ENCODE measurements at regions of chr13 and their contacts with region 1.

Region 1: GRCh38 chr13:27151798-27152599 is 19.6 kb downstream of the USP12 start:
- DNase-seq: no peak
- ATAC-seq: no peak
- H3K4me3 ChIP-seq: no peak overlapping the region
- H3K4me3 Mint-ChIP-seq: no peak overlapping the region
- H3K27ac ChIP-seq: no peak overlapping the region
- H3K27ac Mint-ChIP-seq: no peak overlapping the region
- H3K4me1 ChIP-seq: peaks cover 21% of the 10 kb centered on the region
- H3K4me1 Mint-ChIP-seq: peaks cover 63% of the 10 kb centered on the region
- H3K27me3 ChIP-seq: no peaks in the 10 kb centered on the region
- H3K27me3 Mint-ChIP-seq: no peaks in the 10 kb centered on the region
- CTCF ChIP-seq: no peak

Region 2: GRCh38 chr13:27073186-27073585 is 78.8 kb before region 1 on chr13:
- CTCF ChIA-PET with region 1: no interaction called
- POLR2A ChIA-PET with region 1: no interaction called
- intact Hi-C with region 1: loop called in 1 of 2 experiments (anchors 5 kb)
- DNase-seq: no peak
- ATAC-seq: no peak
- H3K4me3 ChIP-seq: no peak overlapping the region
- H3K4me3 Mint-ChIP-seq: no peak overlapping the region
- H3K27ac ChIP-seq: no peak overlapping the region
- H3K27ac Mint-ChIP-seq: no peak overlapping the region
- H3K4me1 ChIP-seq: no peaks in the 10 kb centered on the region
- H3K4me1 Mint-ChIP-seq: peaks cover 2% of the 10 kb centered on the region
- H3K27me3 ChIP-seq: no peaks in the 10 kb centered on the region
- H3K27me3 Mint-ChIP-seq: no peaks in the 10 kb centered on the region
- CTCF ChIP-seq: no peak

Region 3: DNA sequence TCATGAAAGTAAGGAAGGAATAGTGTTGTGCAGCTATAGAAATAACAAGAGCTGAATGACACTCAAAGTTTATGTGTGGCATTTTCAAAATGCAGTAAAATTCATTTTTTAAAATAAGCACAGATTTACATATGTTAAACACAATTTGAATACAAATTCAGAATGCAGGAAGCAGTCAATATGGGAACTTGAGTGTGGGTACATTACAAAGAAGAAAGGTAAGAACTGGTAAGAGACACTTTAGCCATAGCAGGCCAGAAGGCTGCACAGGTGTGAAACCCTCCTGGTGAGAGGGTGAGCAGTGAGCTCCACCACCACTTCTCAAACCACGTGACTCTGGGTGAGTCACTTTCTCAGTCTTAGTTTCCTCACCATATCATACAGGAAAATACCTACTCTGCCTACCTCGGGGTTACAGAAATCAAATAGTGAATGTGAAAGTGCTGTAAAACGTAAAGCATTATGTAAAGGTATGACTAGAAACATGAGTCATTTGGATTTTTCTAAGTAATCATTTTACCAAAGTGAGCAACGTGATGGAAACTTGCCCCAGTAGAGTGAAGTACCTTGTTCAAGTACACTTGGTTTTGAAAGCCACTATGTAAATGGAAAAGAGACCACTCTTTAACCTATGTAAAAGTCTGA is 20.9 kb before region 1 on chr13:
- CTCF ChIA-PET with region 1: no interaction called
- POLR2A ChIA-PET with region 1: no interaction called
- intact Hi-C with region 1: loop called in 1 of 2 experiments (anchors 1 kb)
- DNase-seq: peak in 8 of 9 experiments; percentile 42 to 91 (median 64)
- ATAC-seq: peak; percentile 91
- H3K4me3 ChIP-seq: peak overlapping the region in 1 of 2 experiments; percentile 18
- H3K4me3 Mint-ChIP-seq: no peak overlapping the region
- H3K27ac ChIP-seq: peak overlapping the region in 1 of 2 experiments; percentile 80
- H3K27ac Mint-ChIP-seq: peak overlapping the region; percentile 71
- H3K4me1 ChIP-seq: peaks cover 33% of the 10 kb centered on the region
- H3K4me1 Mint-ChIP-seq: peaks cover 84% of the 10 kb centered on the region
- H3K27me3 ChIP-seq: no peaks in the 10 kb centered on the region
- H3K27me3 Mint-ChIP-seq: no peaks in the 10 kb centered on the region
- CTCF ChIP-seq: no peak

Region 4: DNA sequence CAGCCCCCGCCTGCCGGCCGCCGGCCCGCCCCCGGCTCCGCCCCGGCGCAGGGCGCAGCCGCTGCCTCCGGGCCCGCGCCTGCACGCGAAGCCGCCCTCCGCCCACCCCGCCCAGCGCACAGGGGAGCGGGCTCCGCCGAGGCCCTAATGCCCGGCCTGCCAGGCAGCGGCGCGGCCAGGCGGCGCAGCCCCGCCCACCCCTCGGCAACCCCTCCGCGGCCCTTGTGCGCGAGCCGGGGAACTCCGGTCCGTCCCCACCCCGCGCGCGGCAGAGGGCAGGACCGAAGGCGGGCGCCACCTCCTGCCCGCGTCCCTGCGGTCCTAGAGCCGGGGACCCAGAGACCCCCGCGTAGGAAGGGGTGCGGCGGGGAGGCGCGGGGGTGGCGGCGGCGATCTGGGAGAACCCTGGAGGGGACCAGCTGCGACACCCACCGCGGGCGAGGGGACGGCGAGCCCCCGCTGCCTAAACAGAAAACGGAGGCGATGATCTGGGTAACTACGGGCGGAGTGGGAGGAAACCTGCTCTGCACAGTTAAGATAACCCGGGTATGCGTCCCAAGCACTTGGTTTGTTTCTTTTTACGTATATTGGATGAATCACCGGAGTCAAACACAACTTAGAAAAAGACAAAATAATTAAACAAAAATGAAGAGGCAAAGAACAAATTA is 20.0 kb after region 1 on chr13:
- CTCF ChIA-PET with region 1: no interaction called
- POLR2A ChIA-PET with region 1: no interaction called
- intact Hi-C with region 1: no loop called
- DNase-seq: peak; percentile 88 to 97 (median 92)
- ATAC-seq: peak; percentile 84
- H3K4me3 ChIP-seq: peak overlapping the region; percentile 72 to 81
- H3K4me3 Mint-ChIP-seq: peak overlapping the region; percentile 79
- H3K27ac ChIP-seq: peak overlapping the region; percentile 74 to 91
- H3K27ac Mint-ChIP-seq: peak overlapping the region; percentile 89
- H3K4me1 ChIP-seq: peaks cover 30% of the 10 kb centered on the region
- H3K4me1 Mint-ChIP-seq: peaks cover 42% of the 10 kb centered on the region
- H3K27me3 ChIP-seq: no peaks in the 10 kb centered on the region
- H3K27me3 Mint-ChIP-seq: no peaks in the 10 kb centered on the region
- CTCF ChIP-seq: no peak

Region 5: DNA sequence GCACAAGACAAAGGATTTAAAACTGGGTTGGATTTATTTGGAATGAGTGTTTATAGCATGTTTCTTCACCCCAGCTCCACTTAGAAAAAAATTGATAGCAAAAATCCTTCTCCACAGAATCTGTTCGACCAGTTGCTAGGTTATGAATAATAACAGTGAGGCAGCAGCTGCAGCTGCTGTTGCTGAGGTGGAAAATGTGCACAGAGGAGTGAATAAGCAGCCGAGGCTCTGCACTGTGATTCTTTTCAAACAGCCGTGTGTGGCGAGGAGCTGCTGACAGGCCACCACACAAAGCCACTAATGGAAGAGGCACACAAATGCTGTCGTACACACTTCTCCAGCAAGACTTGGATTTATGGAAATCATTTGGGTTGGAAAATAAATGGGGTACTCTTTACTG is 112.2 kb after region 1 on chr13:
- CTCF ChIA-PET with region 1: no interaction called
- POLR2A ChIA-PET with region 1: no interaction called
- intact Hi-C with region 1: no loop called
- DNase-seq: peak in 1 of 9 experiments; percentile 11
- ATAC-seq: peak; percentile 42
- H3K4me3 ChIP-seq: no peak overlapping the region
- H3K4me3 Mint-ChIP-seq: no peak overlapping the region
- H3K27ac ChIP-seq: no peak overlapping the region
- H3K27ac Mint-ChIP-seq: peak overlapping the region; percentile 9
- H3K4me1 ChIP-seq: peaks cover 35% of the 10 kb centered on the region
- H3K4me1 Mint-ChIP-seq: peaks cover 67% of the 10 kb centered on the region
- H3K27me3 ChIP-seq: no peaks in the 10 kb centered on the region
- H3K27me3 Mint-ChIP-seq: no peaks in the 10 kb centered on the region
- CTCF ChIP-seq: no peak

Measured in CD8-positive, alpha-beta T cell (primary cell).